Activated CD8-positive, alpha-beta memory T cell treated with anti-CD3 and anti-CD28 coated beads, Interleukin-2, amount 10 ng/mL, durations not matched to agents 7 days and 5 days (primary cell): ENCODE measurements at regions of chr1 and their contacts with region 1.

Region 1: GRCh38 chr1:13828454-13829151 is 128.6 kb downstream of the PRDM2 start:
- DNase-seq: peak; percentile 57
- ATAC-seq: peak; percentile 78
- H3K4me3 Mint-ChIP-seq: no peak overlapping the region
- H3K27ac Mint-ChIP-seq: no peak overlapping the region
- H3K4me1 Mint-ChIP-seq: no peaks in the 10 kb centered on the region
- H3K27me3 Mint-ChIP-seq: peaks cover 2% of the 10 kb centered on the region

Region 2: DNA sequence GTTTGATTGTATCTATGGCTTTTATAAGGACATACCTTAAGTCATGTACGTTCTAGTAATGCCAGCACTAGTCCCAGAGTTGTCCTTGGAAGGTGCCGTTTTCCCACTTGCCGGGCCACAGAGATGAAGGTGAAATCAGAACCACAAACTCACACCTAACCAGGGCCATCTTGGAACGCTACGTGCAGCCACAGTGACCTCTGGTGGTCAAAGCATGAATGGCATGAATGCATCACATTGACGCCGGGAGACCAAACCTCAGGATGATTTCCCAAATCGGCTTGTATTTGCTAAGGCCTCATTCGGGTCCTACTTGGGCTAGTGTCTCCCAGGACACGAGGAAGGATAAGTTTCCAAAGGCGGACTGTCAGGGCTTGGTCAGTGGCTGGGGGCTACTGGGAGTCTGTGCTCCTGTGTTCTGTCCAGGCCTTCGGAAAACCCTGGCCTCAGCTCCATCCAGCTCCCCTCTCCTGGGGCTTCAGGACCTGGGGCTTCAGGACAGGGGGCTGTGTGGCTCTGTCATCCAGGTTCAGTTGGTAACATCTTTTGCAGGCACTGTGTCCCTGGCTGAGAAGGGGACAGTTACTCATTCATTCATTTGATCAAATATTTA is 131.9 kb after region 1 on chr1:
- CTCF ChIA-PET with region 1: interaction called, 15 read pairs
- DNase-seq: peak; percentile 66
- ATAC-seq: peak; percentile 45
- H3K4me3 Mint-ChIP-seq: no peak overlapping the region
- H3K27ac Mint-ChIP-seq: no peak overlapping the region
- H3K4me1 Mint-ChIP-seq: no peaks in the 10 kb centered on the region
- H3K27me3 Mint-ChIP-seq: peaks cover 2% of the 10 kb centered on the region